Breast epithelium (tissue), 4 donors: ENCODE measurements at regions of chr4 and their contacts with region 1.

Region 1: GRCh38 chr4:102723511-102723910 is 37.3 kb downstream of the MANBA start:
- DNase-seq: no peak
- H3K4me3 ChIP-seq: no peak overlapping the region
- H3K27ac ChIP-seq: no peak overlapping the region
- H3K4me1 ChIP-seq: no peaks in the 10 kb centered on the region
- H3K27me3 ChIP-seq: no peaks in the 10 kb centered on the region
- CTCF ChIP-seq: no peak
- POLR2A ChIP-seq: no peak

Region 2: GRCh38 chr4:102736636-102737549 is 13.4 kb after region 1 on chr4:
- intact Hi-C with region 1: no loop called
- DNase-seq: no peak
- H3K4me3 ChIP-seq: no peak overlapping the region
- H3K27ac ChIP-seq: no peak overlapping the region
- H3K4me1 ChIP-seq: no peaks in the 10 kb centered on the region
- H3K27me3 ChIP-seq: no peaks in the 10 kb centered on the region
- CTCF ChIP-seq: no peak
- POLR2A ChIP-seq: no peak

Region 3: GRCh38 chr4:103019308-103020124 is 296.0 kb after region 1 on chr4 and contains the start of gene SLC9B1:
- intact Hi-C with region 1: no loop called
- DNase-seq: peak; percentile 97
- H3K4me3 ChIP-seq: peak within 1 kb of the TSS; percentile 48 to 62 (median 52)
- H3K27ac ChIP-seq: peak within 1 kb of the TSS; percentile 94 to 96
- H3K4me1 ChIP-seq: no peaks in the 10 kb centered on the region
- H3K27me3 ChIP-seq: no peaks in the 10 kb centered on the region
- CTCF ChIP-seq: no peak
- POLR2A ChIP-seq: peak; percentile 83
- total RNA-seq, gene SLC9B1: 0.44 to 1.6 (median 1.3) TPM

Region 4: GRCh38 chr4:103996637-103997036 is 1273.1 kb after region 1 on chr4:
- intact Hi-C with region 1: loop called (anchors 10 kb)
- DNase-seq: peak in 1 of 2 donors; percentile 44
- H3K4me3 ChIP-seq: peak overlapping the region in 1 of 3 donors; percentile 3
- H3K27ac ChIP-seq: peak overlapping the region in 1 of 2 donors; percentile 14
- H3K4me1 ChIP-seq: no peaks in the 10 kb centered on the region
- H3K27me3 ChIP-seq: no peaks in the 10 kb centered on the region
- CTCF ChIP-seq: no peak
- POLR2A ChIP-seq: no peak